HCT116 (cell line): ENCODE measurements at regions of chr19 and their contacts with region 1.

Region 1: GRCh38 chr19:49148784-49149651 is 6.2 kb downstream of the HRC start:
- DNase-seq: peak; percentile 88
- ATAC-seq: peak; percentile 51
- H3K4me3 ChIP-seq: peak overlapping the region; percentile 90 to 95
- H3K27ac ChIP-seq: peak overlapping the region; percentile 94
- H3K4me1 ChIP-seq: peaks cover 25 to 57% of the 10 kb centered on the region in 2 experiments
- H3K27me3 ChIP-seq: no peaks in the 10 kb centered on the region
- CTCF ChIP-seq: no peak
- POLR2A ChIP-seq: peak; percentile 49
- RAD21 ChIP-seq: no peak

Region 2: DNA sequence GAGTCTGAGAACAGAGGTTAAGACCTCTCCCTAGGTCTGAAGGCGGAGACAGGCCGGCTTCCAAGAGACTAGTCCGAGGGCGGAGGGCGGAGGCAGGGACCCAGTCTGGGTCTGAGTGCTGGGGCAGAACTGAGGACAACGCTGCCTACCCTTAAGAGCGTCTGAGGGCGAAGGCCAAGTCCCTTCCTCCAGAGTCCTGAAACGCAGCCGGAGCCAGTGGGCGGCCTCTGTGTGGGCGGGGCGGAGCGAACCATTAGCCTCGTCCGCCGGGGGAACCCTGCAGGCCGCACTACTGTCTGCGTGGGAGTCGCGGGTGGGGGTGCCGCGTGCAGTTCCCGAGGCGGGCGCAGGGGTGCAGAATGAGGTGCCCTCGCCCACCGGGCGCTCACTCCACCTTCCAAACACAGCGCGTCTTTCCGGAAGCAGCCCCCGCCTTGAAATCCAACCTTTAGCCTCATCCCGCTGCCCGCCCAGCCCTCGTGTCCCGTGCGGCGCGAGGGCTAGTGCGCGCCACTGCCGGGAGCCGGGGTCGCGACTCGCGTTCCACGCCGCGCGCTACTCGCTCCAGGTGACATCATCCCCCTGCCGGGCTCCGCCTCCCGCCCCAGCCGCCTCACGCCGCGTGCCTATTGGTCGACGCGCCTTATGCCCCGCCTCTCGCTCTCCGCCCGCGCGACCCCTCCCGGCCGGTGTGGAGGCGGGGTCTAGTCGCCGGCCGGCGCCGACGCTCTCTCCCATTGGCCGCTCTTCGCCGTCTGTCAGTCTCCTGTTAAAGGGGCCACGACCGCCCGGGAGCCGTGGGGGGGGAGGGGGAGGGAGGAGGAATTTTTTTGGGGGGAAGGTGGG is 30.2 kb before region 1 on chr19 and contains the start of gene C19orf73:
- CTCF ChIA-PET with region 1: interaction called, 4 read pairs
- POLR2A ChIA-PET with region 1: interaction called, 8 read pairs
- RAD21 ChIA-PET with region 1: no interaction called
- intact Hi-C with region 1: loop called (anchors 1 kb)
- DNase-seq: peak; percentile 84
- ATAC-seq: peak; percentile 81
- H3K4me3 ChIP-seq: peak within 1 kb of the TSS; percentile 59 to 66
- H3K27ac ChIP-seq: peak within 1 kb of the TSS; percentile 97
- H3K4me1 ChIP-seq: peaks cover 18 to 37% of the 10 kb centered on the region in 2 experiments
- H3K27me3 ChIP-seq: no peaks in the 10 kb centered on the region
- CTCF ChIP-seq: no peak
- POLR2A ChIP-seq: peak; percentile 87
- RAD21 ChIP-seq: no peak
- total RNA-seq, gene C19orf73: 2.2 TPM

Region 3: DNA sequence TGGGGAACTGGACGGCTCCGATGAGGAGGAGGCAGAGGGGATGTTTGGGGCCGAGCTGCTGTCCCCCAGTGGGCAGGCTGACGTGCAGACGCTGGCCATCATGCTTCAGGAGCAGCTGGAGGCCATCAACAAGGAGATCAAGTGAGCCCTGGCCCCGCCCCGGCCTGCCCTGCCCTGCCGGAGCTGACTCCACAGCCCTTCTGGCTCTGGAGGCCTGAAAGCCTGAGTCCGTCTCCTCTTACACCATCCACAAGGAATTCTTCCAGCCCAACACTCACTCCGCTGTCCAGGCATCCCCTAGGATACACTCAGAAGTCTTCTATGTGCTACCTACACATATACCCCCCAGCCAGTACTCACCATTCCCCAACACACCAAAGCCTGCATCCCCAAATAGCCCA is 12.2 kb before region 1 on chr19:
- CTCF ChIA-PET with region 1: interaction called, 19 read pairs
- POLR2A ChIA-PET with region 1: interaction called, 8 read pairs
- RAD21 ChIA-PET with region 1: no interaction called
- intact Hi-C with region 1: no loop called
- DNase-seq: no peak
- ATAC-seq: no peak
- H3K4me3 ChIP-seq: no peak overlapping the region
- H3K27ac ChIP-seq: no peak overlapping the region; the same call in 1 of the 2 replicates
- H3K4me1 ChIP-seq: peaks cover 4 to 16% of the 10 kb centered on the region in 2 experiments
- H3K27me3 ChIP-seq: no peaks in the 10 kb centered on the region
- CTCF ChIP-seq: no peak
- POLR2A ChIP-seq: no peak
- RAD21 ChIP-seq: no peak

Region 4: GRCh38 chr19:49272184-49272583 is 123.2 kb after region 1 on chr19:
- CTCF ChIA-PET with region 1: no interaction called
- POLR2A ChIA-PET with region 1: no interaction called
- RAD21 ChIA-PET with region 1: no interaction called
- intact Hi-C with region 1: no loop called
- DNase-seq: peak; percentile 50
- ATAC-seq: peak; percentile 82
- H3K4me3 ChIP-seq: no peak overlapping the region; a peak in 1 of 4 replicates
- H3K27ac ChIP-seq: peak overlapping the region; percentile 83
- H3K4me1 ChIP-seq: peaks cover 18 to 21% of the 10 kb centered on the region in 2 experiments
- H3K27me3 ChIP-seq: no peaks in the 10 kb centered on the region
- CTCF ChIP-seq: no peak
- POLR2A ChIP-seq: no peak
- RAD21 ChIP-seq: no peak